Activated CD8-positive, alpha-beta T cell treated with anti-CD3 and anti-CD28 coated beads for 36 hours (primary cell): ENCODE measurements at regions of chr1 and their contacts with region 1.

Region 1: GRCh38 chr1:37474046-37474759 is at the start of gene ZC3H12A:
- DNase-seq: peak; percentile 93
- ATAC-seq: peak; percentile 62
- H3K4me3 Mint-ChIP-seq: peak within 1 kb of the TSS; percentile 90
- H3K27ac Mint-ChIP-seq: peak within 1 kb of the TSS; percentile 99
- H3K4me1 Mint-ChIP-seq: peaks cover 37% of the 10 kb centered on the region
- H3K27me3 Mint-ChIP-seq: no peaks in the 10 kb centered on the region
- CTCF ChIP-seq: no peak
- total RNA-seq, gene ZC3H12A: 20.4 to 20.5 TPM

Region 2: DNA sequence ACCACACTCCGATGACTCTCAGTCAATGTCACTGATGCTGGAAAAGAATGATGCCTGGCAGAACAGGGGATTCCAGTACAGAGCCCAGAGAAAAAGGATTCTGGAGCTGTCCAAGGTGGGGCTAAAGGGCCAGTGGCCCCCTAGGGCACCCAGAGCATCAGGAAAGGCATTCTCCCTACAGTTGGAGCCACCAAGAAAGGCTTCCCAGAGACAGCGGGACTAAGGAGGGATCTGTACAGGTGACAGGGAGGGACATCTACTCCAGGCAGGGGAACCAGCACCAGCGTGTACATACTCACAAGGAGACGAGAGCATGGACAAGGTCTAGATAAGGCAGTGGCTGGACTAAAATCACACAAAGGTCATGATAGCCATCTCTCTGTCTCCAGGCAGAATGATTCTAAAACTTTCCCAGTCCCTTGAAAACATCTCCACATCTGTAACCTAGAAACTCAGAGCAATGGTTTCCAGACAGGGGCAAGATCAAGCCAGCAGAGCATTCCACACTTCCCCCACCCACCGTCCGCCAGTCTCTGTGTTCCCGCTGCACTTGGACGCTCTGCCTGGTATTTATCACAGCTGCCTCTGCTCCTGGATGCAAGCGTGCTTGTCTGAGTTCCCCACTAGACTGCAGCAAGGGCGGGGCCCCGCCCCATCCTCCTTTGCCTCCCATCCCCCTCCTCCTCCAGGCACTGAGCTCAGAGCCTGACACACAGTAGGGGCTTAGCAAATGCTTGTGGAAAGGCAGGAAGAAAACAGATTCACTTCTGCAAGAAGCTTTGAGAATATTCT is 111.4 kb before region 1 on chr1:
- CTCF ChIA-PET with region 1: no interaction called
- POLR2A ChIA-PET with region 1: no interaction called
- intact Hi-C with region 1: no loop called
- DNase-seq: no peak
- ATAC-seq: no peak
- H3K4me3 Mint-ChIP-seq: no peak overlapping the region
- H3K27ac Mint-ChIP-seq: no peak overlapping the region
- H3K4me1 Mint-ChIP-seq: no peaks in the 10 kb centered on the region
- H3K27me3 Mint-ChIP-seq: peaks cover 19% of the 10 kb centered on the region
- CTCF ChIP-seq: no peak

Region 3: DNA sequence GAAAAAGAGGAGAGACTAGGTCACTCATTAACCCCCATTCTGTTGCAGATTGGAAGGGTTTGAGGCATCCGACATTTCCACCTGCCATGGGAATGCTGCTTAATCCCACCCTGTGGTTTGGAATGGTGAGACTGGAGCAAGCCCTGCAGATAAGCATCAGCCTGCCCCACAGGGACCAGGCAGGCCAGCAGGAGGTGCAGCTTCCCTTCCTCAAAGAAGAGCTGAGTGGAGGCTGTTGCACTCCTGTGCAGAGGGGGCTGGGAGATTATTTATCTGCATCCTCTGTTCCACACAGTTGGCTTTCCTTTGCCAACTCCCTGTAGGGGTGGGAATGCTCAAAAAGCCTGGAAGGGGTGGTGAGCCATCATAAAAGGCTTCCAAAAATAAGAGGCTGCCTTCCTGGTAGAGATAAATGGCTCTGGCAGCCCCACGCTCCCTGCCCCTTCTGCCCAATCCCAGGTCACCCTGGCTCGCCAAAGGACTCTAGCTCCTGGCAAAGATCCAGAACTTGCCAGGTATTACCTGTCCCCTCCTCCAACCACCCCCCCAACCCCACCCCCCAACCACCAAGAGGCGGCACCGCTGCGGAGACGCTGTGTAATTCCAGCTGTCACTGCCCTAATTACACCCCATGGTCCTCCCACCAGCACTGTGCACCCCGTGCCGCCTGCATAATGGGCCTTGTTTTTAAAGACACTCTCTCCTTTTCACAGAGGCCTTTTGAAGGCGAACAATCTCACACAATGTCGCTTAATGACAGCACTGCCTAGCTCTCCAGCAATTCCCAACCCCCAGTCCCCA is 82.8 kb before region 1 on chr1:
- CTCF ChIA-PET with region 1: no interaction called
- POLR2A ChIA-PET with region 1: no interaction called
- intact Hi-C with region 1: no loop called
- DNase-seq: no peak
- ATAC-seq: no peak
- H3K4me3 Mint-ChIP-seq: no peak overlapping the region
- H3K27ac Mint-ChIP-seq: no peak overlapping the region
- H3K4me1 Mint-ChIP-seq: no peaks in the 10 kb centered on the region
- H3K27me3 Mint-ChIP-seq: peaks cover 23% of the 10 kb centered on the region
- CTCF ChIP-seq: no peak

Region 4: DNA sequence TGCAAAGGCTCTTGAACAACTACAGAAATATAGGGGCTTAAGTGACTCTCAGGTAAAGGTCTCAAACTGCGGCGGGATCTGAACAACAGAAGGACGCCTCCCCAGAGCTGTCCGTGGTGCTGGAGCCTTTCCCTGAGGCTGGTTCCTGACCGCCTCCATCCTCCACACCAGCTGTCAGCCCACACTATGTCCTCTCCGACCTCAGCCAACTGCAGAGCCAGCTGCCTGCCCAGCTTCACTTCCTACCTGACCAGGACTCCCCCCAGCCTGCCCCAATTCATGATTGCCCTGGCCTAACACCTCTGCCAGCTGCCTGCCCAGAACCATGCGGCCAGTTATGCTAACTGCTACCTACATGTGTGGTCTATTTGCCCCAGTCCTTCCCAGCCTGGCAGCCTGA is 63.4 kb before region 1 on chr1:
- CTCF ChIA-PET with region 1: no interaction called
- POLR2A ChIA-PET with region 1: no interaction called
- intact Hi-C with region 1: no loop called
- DNase-seq: peak; percentile 41
- ATAC-seq: peak; percentile 30
- H3K4me3 Mint-ChIP-seq: no peak overlapping the region
- H3K27ac Mint-ChIP-seq: no peak overlapping the region
- H3K4me1 Mint-ChIP-seq: peaks cover 3% of the 10 kb centered on the region
- H3K27me3 Mint-ChIP-seq: peaks cover 6% of the 10 kb centered on the region
- CTCF ChIP-seq: no peak

Region 5: GRCh38 chr1:37458528-37458927 is 15.7 kb before region 1 on chr1:
- CTCF ChIA-PET with region 1: interaction called, 89 read pairs
- POLR2A ChIA-PET with region 1: interaction called, 5 read pairs
- intact Hi-C with region 1: no loop called
- DNase-seq: peak; percentile 9
- ATAC-seq: no peak
- H3K4me3 Mint-ChIP-seq: no peak overlapping the region
- H3K27ac Mint-ChIP-seq: no peak overlapping the region
- H3K4me1 Mint-ChIP-seq: peaks cover 7% of the 10 kb centered on the region
- H3K27me3 Mint-ChIP-seq: no peaks in the 10 kb centered on the region
- CTCF ChIP-seq: no peak